Activated CD4-positive, alpha-beta T cell treated with anti-CD3 and anti-CD28 coated beads, Interleukin-2, amount 10 ng/mL, durations not matched to agents 24 days and 14 days (primary cell): ENCODE measurements at regions of chr6 and their contacts with region 1.

Region 1: GRCh38 chr6:16591396-16592222 is 169.7 kb downstream of the ATXN1 start:
- DNase-seq: no peak
- H3K4me3 Mint-ChIP-seq: peak overlapping the region; percentile 16
- H3K27ac Mint-ChIP-seq: peak overlapping the region; percentile 87
- H3K4me1 Mint-ChIP-seq: peaks cover 24% of the 10 kb centered on the region
- H3K27me3 Mint-ChIP-seq: no peaks in the 10 kb centered on the region

Region 2: GRCh38 chr6:16533721-16534136 is 57.9 kb before region 1 on chr6:
- intact Hi-C with region 1: loop called (anchors 5 kb)
- DNase-seq: no peak
- H3K4me3 Mint-ChIP-seq: no peak overlapping the region
- H3K27ac Mint-ChIP-seq: peak overlapping the region; percentile 46
- H3K4me1 Mint-ChIP-seq: peaks cover 19% of the 10 kb centered on the region
- H3K27me3 Mint-ChIP-seq: no peaks in the 10 kb centered on the region

Region 3: DNA sequence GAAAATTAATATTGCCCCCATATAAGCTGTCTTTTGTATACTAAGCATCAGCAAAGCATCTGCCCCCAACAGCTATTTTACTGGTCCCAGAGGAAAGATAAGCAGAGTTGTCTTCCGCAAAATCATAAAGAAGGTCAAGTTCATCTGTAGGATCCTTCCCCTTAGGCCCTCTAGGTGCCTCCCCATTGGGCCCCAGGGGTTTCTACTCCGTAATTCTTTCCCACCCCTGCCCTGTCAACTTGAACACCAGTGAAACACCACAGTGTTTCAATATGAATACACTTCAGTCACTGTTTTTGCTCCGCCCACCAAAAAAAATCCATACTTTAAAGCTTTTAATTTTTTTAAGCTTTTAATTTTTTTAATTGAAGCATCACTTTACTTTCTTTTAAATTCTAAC is 10.4 kb after region 1 on chr6:
- intact Hi-C with region 1: loop called (anchors 1 kb)
- DNase-seq: peak; percentile 68
- H3K4me3 Mint-ChIP-seq: peak overlapping the region; percentile 9
- H3K27ac Mint-ChIP-seq: peak overlapping the region; percentile 27
- H3K4me1 Mint-ChIP-seq: peaks cover 27% of the 10 kb centered on the region
- H3K27me3 Mint-ChIP-seq: no peaks in the 10 kb centered on the region

Region 4: DNA sequence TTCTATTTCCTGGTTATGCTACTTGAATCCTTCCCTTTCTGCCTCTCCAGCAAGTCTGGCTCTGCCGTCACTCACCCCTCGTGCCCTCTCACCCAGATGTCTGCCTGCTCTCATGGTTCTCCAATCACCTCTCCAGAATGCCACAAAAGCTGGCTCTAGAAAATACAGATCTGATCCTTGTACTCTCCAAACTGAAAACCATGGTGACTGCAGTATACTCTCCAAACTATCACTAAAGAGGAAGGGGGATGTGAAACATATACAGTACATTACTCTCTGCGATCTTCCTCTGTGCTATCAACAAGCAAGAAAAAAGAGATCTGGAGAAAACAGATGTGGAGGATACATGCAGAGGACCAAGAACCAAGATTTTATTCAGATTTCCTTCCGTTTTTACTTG is 78.6 kb after region 1 on chr6:
- intact Hi-C with region 1: no loop called
- DNase-seq: no peak
- H3K4me3 Mint-ChIP-seq: peak overlapping the region; percentile 70
- H3K27ac Mint-ChIP-seq: peak overlapping the region; percentile 97
- H3K4me1 Mint-ChIP-seq: peaks cover 64% of the 10 kb centered on the region
- H3K27me3 Mint-ChIP-seq: no peaks in the 10 kb centered on the region